ENCODE measurements at regions of chr9 and their contacts with region 1.

Region 1: DNA sequence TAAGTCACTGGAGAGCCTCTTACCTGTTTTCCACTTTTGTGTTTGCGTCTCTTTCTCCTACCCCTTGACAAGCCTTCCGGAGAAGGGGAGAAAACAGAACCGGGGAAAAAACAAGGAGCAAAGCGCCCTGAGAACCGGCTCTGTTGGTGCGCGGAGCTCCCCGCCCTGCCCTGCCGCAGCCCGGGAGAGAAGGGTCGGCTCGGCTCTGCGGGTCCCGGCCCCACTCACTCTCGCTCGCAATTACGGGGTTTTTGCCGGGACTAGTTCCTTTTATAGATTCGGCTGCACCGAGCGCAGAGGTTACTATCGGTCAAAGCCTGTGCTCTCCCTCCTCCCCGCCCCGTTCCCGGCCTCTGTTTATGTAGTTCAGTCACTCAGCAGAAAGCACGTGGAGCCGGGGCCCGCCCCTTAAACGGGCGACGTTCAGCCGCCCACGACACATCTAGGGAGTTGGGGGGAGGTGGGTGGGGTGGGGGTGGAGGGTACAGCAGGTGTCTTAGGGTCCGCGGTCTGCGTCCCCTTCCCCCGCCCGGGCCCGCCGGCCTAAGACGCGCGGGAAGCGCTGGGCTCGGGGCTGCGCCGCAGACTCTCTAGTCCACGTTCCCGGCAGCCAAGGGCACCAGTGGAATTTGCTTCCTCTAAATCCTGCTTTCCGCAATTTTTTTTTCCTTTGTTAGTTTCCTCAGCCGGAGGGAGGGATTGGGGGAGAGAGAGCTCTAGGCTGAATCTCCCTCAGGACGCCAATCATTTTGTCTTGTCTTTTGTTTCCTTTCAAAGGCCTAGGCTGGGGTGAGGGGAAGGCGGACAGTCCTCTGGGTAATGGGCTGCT is at the start of gene ABCA1:
- DNase-seq: peak; percentile 92
- ATAC-seq: peak; percentile 62
- H3K4me3 ChIP-seq: peak within 1 kb of the TSS; percentile 73 to 96 (median 94)
- H3K4me3 Mint-ChIP-seq: peak within 1 kb of the TSS; percentile 98
- H3K27ac ChIP-seq: peak within 1 kb of the TSS; percentile 69 to 72
- H3K27ac Mint-ChIP-seq: peak within 1 kb of the TSS; percentile 88
- H3K4me1 ChIP-seq: peaks cover 31 to 41% of the 10 kb centered on the region in 2 donors
- H3K4me1 Mint-ChIP-seq: peaks cover 42% of the 10 kb centered on the region
- H3K27me3 ChIP-seq: no peaks in the 10 kb centered on the region
- H3K27me3 Mint-ChIP-seq: no peaks in the 10 kb centered on the region
- CTCF ChIP-seq: no peak
- total RNA-seq, gene ABCA1: 22.8 and 24.0 TPM in 2 replicates

Region 2: DNA sequence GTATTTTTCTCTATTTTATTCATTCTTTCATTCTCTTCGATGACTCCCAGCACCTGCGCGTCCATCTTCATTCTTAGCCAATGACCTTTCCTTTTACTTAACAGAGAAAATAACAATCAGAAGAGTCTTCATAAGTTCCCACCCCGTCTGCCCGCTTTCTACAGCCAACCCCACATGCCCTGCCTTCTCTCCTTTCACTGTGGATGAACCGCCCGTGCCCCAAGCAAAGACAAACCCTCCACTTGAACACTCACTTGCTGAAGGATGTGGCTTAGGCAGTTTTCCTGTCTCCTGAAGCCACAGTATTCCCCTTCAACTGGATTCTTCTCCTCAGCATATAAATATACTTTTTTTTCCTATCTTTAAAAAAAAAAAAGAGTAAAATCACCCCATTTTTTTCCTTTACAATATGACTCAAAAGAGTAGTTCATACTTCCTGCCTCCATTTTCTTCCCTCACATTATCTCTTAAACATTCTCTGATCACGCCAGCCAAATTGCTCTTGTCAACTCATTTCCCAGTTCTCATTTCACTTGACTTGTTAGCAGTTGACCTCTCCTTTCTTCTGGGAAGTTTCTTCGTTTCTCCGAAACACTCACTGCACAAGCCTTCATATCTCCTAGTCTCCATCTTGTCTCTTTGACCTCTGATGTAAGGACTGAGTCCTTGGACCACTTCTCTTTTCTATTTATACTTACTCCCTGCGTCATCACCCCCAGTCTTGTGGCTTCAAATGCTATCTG is 153.1 kb before region 1 on chr9:
- CTCF ChIA-PET with region 1: no interaction called
- POLR2A ChIA-PET with region 1: no interaction called
- intact Hi-C with region 1: loop called (anchors 2 kb)
- DNase-seq: peak; percentile 86
- ATAC-seq: peak; percentile 90
- H3K4me3 ChIP-seq: peak overlapping the region in 4 of 5 experiments; percentile 3 to 48 (median 36)
- H3K4me3 Mint-ChIP-seq: no peak overlapping the region
- H3K27ac ChIP-seq: peak overlapping the region; percentile 77 to 81
- H3K27ac Mint-ChIP-seq: no peak overlapping the region
- H3K4me1 ChIP-seq: peaks cover 38 to 43% of the 10 kb centered on the region in 2 donors
- H3K4me1 Mint-ChIP-seq: peaks cover 34% of the 10 kb centered on the region
- H3K27me3 ChIP-seq: no peaks in the 10 kb centered on the region
- H3K27me3 Mint-ChIP-seq: no peaks in the 10 kb centered on the region
- CTCF ChIP-seq: no peak

Region 3: DNA sequence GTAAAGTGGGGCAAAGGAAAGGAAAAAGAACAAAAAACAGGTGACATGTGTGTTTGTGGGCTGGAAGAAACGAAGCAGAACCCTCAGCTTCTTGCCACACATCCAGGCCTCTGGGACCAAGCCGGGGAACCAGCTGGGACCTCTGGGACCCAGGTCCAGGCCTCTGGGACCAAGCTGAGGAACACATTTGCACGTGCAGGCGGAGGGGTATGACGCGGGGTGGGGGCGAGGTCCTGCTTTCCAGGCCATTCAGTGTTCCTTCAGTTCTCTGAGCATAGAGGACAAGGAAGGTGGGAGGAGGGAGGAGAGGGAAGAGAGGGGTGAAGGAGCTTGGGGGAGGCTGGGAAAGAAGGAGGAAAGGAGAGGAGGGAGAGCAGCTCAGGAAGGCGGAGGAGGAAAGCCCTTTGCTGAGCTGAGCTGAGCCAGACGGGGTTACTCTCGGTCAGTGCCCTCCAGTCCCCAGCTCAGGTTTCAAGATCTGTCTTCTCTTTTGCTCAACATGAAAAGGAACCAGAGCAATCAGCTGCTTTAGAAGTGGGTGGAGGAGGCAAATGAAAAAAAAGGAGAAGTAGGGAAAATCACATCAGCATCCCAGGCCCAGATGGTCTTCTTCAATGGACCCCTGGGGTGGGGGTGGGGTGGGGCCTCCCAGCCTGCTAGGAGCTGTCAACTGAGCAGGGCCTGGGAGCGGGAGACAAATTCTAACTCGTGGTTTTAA is 59.3 kb before region 1 on chr9:
- CTCF ChIA-PET with region 1: interaction called, 33 read pairs
- POLR2A ChIA-PET with region 1: interaction called, 18 read pairs
- intact Hi-C with region 1: loop called (anchors 2 kb)
- DNase-seq: peak; percentile 83
- ATAC-seq: peak; percentile 88
- H3K4me3 ChIP-seq: peak overlapping the region in 1 of 5 experiments; percentile 2
- H3K4me3 Mint-ChIP-seq: peak overlapping the region; percentile 74
- H3K27ac ChIP-seq: peak overlapping the region; percentile 54 to 69
- H3K27ac Mint-ChIP-seq: peak overlapping the region; percentile 81
- H3K4me1 ChIP-seq: peaks cover 18 to 35% of the 10 kb centered on the region in 2 donors
- H3K4me1 Mint-ChIP-seq: peaks cover 39% of the 10 kb centered on the region
- H3K27me3 ChIP-seq: no peaks in the 10 kb centered on the region
- H3K27me3 Mint-ChIP-seq: no peaks in the 10 kb centered on the region
- CTCF ChIP-seq: no peak

Region 4: DNA sequence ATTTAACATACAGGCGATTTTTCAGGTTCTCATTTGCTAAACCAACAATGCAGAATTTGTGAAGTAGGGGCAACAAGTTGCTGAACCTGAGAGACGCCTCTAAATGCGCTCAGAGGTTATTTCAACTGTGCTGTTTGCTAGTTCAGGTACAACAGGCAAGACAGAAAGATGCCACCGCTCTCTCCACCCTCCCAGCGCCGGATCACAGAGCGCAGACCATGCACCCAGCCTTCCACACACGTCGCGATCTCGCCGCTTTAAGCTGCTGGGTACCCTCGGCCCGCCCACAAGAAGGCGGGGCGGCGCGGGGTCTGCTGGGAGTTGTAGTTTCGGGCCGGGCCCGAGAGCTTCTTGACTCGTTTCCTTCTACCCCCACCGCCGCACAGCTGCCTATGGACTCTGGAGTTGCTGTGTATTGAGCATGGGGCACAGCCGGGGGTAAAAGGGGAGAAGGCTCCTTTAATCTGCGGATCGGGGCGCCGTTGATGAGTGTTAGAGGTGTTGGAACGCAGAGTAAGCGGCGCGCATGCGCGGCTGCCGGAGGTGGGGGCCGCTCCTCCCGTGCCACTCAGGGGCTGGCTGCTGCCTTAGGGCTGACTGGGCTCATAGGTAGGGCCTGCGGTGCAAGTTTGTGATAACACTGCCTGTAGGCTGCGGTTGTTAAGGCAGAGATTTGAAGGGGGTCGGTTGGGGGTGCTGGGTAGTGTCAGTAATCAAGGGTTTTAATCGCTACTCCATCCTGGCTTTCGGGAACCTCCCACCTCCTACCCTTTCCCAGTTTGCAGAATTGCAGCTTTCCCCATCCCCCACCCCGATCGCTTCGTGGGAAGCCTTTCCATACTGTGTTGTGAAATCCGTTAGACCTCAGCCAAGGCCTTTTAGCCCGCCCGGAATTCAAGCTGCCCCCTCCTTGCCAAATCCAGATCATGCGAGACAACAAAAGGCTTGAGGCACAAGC is 40.2 kb after region 1 on chr9:
- CTCF ChIA-PET with region 1: interaction called, 12 read pairs
- POLR2A ChIA-PET with region 1: interaction called, 14 read pairs
- intact Hi-C with region 1: loop called (anchors 1 kb)
- DNase-seq: peak; percentile 92
- ATAC-seq: peak; percentile 99
- H3K4me3 ChIP-seq: peak overlapping the region; percentile 68 to 86 (median 78)
- H3K4me3 Mint-ChIP-seq: peak overlapping the region; percentile 91
- H3K27ac ChIP-seq: no peak overlapping the region
- H3K27ac Mint-ChIP-seq: peak overlapping the region; percentile 71
- H3K4me1 ChIP-seq: peaks cover 4 to 14% of the 10 kb centered on the region in 2 donors
- H3K4me1 Mint-ChIP-seq: peaks cover 10% of the 10 kb centered on the region
- H3K27me3 ChIP-seq: peaks cover 0 to 4% (median 2%) of the 10 kb centered on the region in 4 experiments
- H3K27me3 Mint-ChIP-seq: peaks cover 21% of the 10 kb centered on the region
- CTCF ChIP-seq: no peak

Region 5: DNA sequence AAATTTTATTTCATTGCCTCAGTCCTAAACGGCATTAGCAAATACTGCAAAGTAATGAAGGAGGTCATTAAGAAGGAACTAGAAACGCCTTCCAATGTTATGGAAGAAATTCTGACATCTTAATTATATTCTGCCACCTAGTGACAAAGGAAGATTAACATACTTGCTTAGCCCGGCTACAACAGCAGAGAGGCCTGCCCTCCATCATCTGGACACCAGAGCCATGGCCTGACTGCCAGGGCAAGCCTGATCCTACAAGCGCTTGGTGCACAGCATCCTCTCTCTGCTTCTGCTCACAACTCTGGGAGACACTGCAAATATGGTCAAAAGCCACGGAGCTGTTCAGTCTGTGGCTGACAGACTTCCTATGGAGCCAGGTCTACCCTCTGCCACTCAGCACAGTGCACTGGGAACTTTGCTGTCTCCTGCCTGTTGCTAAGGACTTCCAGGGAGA is 229.0 kb after region 1 on chr9:
- CTCF ChIA-PET with region 1: interaction called, 8 read pairs
- POLR2A ChIA-PET with region 1: interaction called, 3 read pairs
- intact Hi-C with region 1: loop called (anchors 5 kb)
- DNase-seq: peak; percentile 59
- ATAC-seq: peak; percentile 63
- H3K4me3 ChIP-seq: no peak overlapping the region
- H3K4me3 Mint-ChIP-seq: no peak overlapping the region
- H3K27ac ChIP-seq: no peak overlapping the region
- H3K27ac Mint-ChIP-seq: no peak overlapping the region
- H3K4me1 ChIP-seq: no peaks in the 10 kb centered on the region
- H3K4me1 Mint-ChIP-seq: peaks cover 3% of the 10 kb centered on the region
- H3K27me3 ChIP-seq: no peaks in the 10 kb centered on the region
- H3K27me3 Mint-ChIP-seq: no peaks in the 10 kb centered on the region
- CTCF ChIP-seq: peak; percentile 56

Region 6: GRCh38 chr9:105264380-105264779 is 336.3 kb after region 1 on chr9:
- CTCF ChIA-PET with region 1: no interaction called
- POLR2A ChIA-PET with region 1: no interaction called
- intact Hi-C with region 1: no loop called
- DNase-seq: no peak
- ATAC-seq: no peak
- H3K4me3 ChIP-seq: no peak overlapping the region
- H3K4me3 Mint-ChIP-seq: no peak overlapping the region
- H3K27ac ChIP-seq: no peak overlapping the region
- H3K27ac Mint-ChIP-seq: no peak overlapping the region
- H3K4me1 ChIP-seq: peaks cover 5 to 8% of the 10 kb centered on the region in 2 donors
- H3K4me1 Mint-ChIP-seq: peaks cover 13% of the 10 kb centered on the region
- H3K27me3 ChIP-seq: no peaks in the 10 kb centered on the region
- H3K27me3 Mint-ChIP-seq: no peaks in the 10 kb centered on the region
- CTCF ChIP-seq: no peak

Region 7: GRCh38 chr9:105694190-105694847 is 766.2 kb after region 1 on chr9 and contains the start of gene TMEM38B:
- CTCF ChIA-PET with region 1: no interaction called
- POLR2A ChIA-PET with region 1: no interaction called
- intact Hi-C with region 1: loop called (anchors 10 kb)
- DNase-seq: peak; percentile 90
- ATAC-seq: peak; percentile 83
- H3K4me3 ChIP-seq: peak within 1 kb of the TSS; percentile 75 to 93 (median 82)
- H3K4me3 Mint-ChIP-seq: peak within 1 kb of the TSS; percentile 95
- H3K27ac ChIP-seq: peak within 1 kb of the TSS; percentile 58 to 77
- H3K27ac Mint-ChIP-seq: peak within 1 kb of the TSS; percentile 92
- H3K4me1 ChIP-seq: peaks cover 17 to 18% of the 10 kb centered on the region in 2 donors
- H3K4me1 Mint-ChIP-seq: peaks cover 19% of the 10 kb centered on the region
- H3K27me3 ChIP-seq: peaks cover 0 to 14% (median 11%) of the 10 kb centered on the region in 4 experiments
- H3K27me3 Mint-ChIP-seq: peaks cover 26% of the 10 kb centered on the region
- CTCF ChIP-seq: no peak
- total RNA-seq, gene TMEM38B: 29.6 and 35.2 TPM in 2 replicates